Natural killer cell (primary cell): ENCODE measurements at regions of chr17 and their contacts with region 1.

Region 1: GRCh38 chr17:29568331-29569244 is at the start of gene TP53I13:
- DNase-seq: peak; percentile 74 to 92
- ATAC-seq: peak; percentile 57 to 73 (median 57)
- H3K4me3 ChIP-seq: peak within 1 kb of the TSS; percentile 96
- H3K4me3 Mint-ChIP-seq: peak within 1 kb of the TSS; percentile 99
- H3K27ac ChIP-seq: peak within 1 kb of the TSS; percentile 83
- H3K27ac Mint-ChIP-seq: peak within 1 kb of the TSS; percentile 93 to 94
- H3K4me1 ChIP-seq: peaks cover 49% of the 10 kb centered on the region
- H3K4me1 Mint-ChIP-seq: peaks cover 38 to 47% of the 10 kb centered on the region in 2 donors
- H3K27me3 ChIP-seq: no peaks in the 10 kb centered on the region
- H3K27me3 Mint-ChIP-seq: no peaks in the 10 kb centered on the region
- CTCF ChIP-seq: no peak
- total RNA-seq, gene TP53I13: 122 to 148 (median 148) TPM

Region 2: GRCh38 chr17:29589524-29590410 is 21.2 kb after region 1 on chr17 and contains the start of gene GIT1:
- intact Hi-C with region 1: loop called (anchors 2 kb)
- DNase-seq: peak; percentile 86 to 93
- ATAC-seq: peak; percentile 86 to 95 (median 87)
- H3K4me3 ChIP-seq: peak within 1 kb of the TSS; percentile 70
- H3K4me3 Mint-ChIP-seq: peak within 1 kb of the TSS; percentile 85
- H3K27ac ChIP-seq: peak within 1 kb of the TSS; percentile 66
- H3K27ac Mint-ChIP-seq: peak within 1 kb of the TSS; percentile 50 to 83
- H3K4me1 ChIP-seq: peaks cover 80% of the 10 kb centered on the region
- H3K4me1 Mint-ChIP-seq: peaks cover 20 to 67% of the 10 kb centered on the region in 2 donors
- H3K27me3 ChIP-seq: peaks cover 3% of the 10 kb centered on the region
- H3K27me3 Mint-ChIP-seq: no peaks in the 10 kb centered on the region
- CTCF ChIP-seq: no peak
- total RNA-seq, gene GIT1: 39.4 to 61.4 (median 54.6) TPM